HEK293 (cell line): ENCODE measurements at regions of chr18 and their contacts with region 1.

Region 1: DNA sequence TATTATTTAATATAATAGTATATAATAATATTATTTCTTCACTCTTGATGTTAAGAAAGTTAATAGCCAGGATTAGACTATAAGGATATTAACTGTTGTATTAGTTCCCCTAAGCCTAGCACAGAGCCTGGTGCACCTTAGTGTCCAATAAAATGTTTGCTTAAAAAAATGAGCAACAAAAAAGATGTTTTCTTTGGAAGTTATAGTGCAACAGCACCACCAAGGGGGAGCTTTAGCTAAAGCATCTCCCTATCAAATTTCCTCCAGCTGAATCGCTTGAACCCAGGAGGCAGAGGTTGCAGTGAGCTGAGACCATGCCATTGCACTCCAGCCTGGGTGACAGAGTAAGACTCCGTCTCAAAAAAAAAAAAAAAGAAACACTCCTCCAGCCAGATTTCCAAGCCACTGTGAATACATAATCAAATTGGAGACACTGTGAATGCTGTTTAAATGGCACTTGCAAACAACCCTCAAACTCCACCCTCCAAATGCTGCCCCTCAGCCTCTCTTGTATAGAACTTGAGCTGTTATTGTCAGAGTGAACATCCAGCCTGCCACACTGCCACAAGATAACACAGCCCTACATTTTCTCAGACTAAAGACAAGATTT is 221.9 kb downstream of the DYM start:
- H3K4me3 ChIP-seq: no peak overlapping the region
- H3K27ac ChIP-seq: no peak overlapping the region
- H3K4me1 ChIP-seq: no peaks in the 10 kb centered on the region
- CTCF ChIP-seq: peak; percentile 50

Region 2: DNA sequence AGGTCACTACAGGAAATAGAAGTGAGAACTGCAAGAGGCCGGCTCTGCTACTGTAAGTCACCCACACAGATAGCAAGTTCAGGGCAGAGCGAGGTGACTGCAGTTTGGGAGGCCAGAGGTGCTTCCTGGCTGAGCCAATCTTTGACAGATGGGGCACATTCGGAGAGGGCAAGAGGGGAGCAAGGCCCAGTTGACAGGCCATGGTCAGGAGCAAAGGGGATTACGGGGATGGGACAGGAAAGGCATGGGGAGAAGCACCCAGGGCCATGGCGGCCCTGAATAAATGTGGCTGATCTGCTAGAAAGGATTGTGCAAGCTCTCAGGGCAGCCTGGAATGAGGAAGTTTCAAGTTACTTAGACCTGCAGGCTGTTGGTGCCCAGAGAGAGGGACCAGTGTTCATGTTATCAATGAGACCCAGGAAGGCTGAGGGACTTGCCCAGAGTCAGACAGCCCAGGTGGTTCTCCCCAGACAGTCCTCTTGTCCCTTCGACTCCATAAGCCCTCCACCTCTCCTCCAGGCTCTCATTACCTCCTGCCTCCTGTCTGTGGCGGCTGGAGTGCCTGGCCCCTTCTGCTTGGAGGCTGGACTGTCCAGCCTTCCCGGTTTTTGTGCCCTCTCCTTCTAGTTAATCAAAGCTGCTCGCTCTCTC is 576.4 kb before region 1 on chr18:
- CTCF ChIA-PET with region 1: no interaction called
- POLR2A ChIA-PET with region 1: no interaction called
- H3K4me3 ChIP-seq: no peak overlapping the region
- H3K27ac ChIP-seq: no peak overlapping the region
- H3K4me1 ChIP-seq: peaks cover 14% of the 10 kb centered on the region
- CTCF ChIP-seq: no peak

Region 3: GRCh38 chr18:48675352-48675761 is 563.2 kb before region 1 on chr18:
- CTCF ChIA-PET with region 1: interaction called, 32 read pairs
- POLR2A ChIA-PET with region 1: no interaction called
- H3K4me3 ChIP-seq: no peak overlapping the region
- H3K27ac ChIP-seq: no peak overlapping the region
- H3K4me1 ChIP-seq: no peaks in the 10 kb centered on the region
- CTCF ChIP-seq: peak; percentile 99

Region 4: DNA sequence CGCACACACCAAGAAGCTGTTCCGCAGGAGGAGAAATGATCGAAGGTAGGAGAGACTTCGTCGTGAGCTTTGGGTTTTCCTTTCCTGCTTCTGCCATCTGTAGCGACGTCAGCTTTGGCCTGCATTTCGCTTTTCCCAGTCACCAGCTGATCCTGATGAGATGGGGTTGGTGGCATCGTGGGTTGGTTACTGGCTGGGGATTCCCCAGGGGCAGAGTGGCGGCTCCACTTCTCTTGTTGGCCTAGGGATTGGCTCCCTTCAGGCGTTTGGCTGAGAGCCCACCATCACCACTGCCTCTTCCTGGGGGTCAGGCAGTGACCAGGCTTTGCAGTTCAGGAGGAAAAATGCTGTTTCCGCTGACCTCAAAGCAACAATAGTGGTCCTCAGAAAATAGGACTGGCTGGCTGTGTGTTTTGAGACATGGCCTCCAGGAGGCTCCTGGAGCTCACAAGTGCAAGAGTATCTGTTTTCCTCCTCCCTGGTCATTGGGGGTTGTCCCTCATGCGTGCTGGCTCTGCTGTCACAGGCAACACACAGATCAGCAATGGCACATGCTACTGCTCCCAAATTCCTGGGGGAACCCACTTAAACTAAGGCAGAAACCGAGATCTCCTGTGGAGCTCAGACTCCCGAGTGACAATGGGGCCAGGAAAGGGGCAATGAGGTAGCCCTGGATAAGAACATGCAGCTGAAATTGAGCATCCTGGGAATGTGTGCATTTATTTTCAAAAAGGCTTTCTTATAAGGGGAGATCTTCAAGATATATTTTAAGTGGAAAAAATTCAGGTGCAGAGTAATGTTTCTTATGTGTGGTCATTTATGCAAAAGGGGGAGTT is 526.7 kb before region 1 on chr18:
- CTCF ChIA-PET with region 1: interaction called, 22 read pairs
- POLR2A ChIA-PET with region 1: no interaction called
- H3K4me3 ChIP-seq: no peak overlapping the region
- H3K27ac ChIP-seq: no peak overlapping the region
- H3K4me1 ChIP-seq: no peaks in the 10 kb centered on the region
- CTCF ChIP-seq: peak; percentile 77

Region 5: DNA sequence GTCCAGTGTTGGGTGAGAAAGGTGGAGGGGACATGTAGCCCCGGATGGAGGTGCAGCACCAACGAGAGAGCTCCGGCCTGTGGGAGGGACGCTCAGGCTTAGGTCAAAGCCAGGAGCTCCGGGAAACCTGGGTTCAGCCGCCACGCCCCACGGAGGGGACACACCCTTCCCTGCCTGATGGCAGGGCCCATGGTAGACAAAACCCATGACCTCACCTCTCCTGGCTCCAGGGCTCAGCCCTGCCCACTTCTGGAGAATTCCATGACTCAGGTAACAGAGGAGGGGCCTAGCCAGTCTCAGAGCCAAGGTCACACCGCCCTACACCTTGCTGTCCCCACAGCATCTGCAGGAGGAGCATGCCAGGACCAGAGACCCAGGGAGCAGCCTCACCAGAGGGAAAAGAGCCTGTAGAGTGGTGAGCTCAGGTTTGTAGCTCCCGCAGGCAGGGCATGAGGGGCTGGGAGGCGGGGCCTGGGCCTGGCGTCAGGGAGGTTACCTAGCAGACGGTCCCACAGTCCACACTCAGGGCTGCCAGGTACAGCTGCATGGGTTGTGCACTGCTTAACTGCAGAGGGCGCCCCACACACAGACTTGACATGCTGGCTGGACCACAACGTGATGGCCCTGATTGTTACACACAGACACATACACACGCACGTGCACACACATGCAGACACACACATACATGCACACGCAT is 217.0 kb before region 1 on chr18:
- CTCF ChIA-PET with region 1: interaction called, 22 read pairs
- POLR2A ChIA-PET with region 1: no interaction called
- H3K4me3 ChIP-seq: peak overlapping the region; percentile 32
- H3K27ac ChIP-seq: no peak overlapping the region; the same call in 1 of the 2 replicates
- H3K4me1 ChIP-seq: peaks cover 9% of the 10 kb centered on the region
- CTCF ChIP-seq: peak; percentile 68; the same call in 1 of the 2 replicates

Region 6: DNA sequence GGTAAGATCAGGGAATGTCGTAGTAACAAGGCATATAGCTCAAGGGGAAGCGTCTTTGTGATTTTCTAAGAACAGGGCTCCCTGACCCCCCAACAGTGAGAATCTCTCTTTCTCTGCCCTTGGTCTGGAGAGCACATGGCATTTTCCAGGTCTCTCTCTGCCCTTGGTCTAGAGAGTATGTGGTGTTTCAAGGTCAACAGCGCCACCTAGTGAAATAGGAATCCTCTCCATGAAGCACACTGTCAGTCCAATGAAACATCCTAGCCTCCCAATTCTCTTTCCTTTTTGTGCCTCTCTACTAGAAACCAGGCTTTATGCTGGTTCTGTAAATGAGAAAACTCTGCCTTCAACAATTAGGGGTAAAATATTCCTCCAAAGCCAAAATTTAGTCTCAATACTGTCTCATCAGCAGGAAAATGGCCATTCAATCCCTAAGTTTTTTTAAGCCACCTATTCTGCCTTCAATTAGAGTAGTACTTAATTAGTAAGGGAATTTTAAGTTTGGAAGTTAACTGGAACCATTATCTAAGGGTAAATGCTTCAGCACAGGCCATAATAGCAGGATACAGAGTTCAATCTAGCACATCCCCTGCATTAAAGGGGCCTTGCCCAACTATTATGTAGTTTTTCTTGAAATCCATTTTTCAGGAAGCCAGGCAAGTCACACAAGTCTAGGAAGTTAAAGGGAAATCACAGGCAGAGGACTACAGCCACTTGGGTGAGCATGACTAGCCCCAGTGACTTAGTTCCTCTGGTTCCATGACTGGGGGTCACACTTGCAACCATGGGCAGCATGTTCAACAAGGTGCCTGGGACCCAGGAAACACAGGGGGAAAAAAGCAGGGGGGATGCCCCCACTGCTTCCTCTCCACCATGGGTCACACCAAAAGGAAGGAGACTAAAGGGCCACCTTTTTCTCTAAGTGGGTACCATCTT is 209.5 kb after region 1 on chr18:
- CTCF ChIA-PET with region 1: interaction called, 12 read pairs
- POLR2A ChIA-PET with region 1: no interaction called
- H3K4me3 ChIP-seq: no peak overlapping the region
- H3K27ac ChIP-seq: no peak overlapping the region
- H3K4me1 ChIP-seq: no peaks in the 10 kb centered on the region
- CTCF ChIP-seq: 0 out of 2 replicates have a peak, but pooled peaks have one; percentile 27